GM12878 (cell line): ENCODE measurements at regions of chr6 and their contacts with region 1.

Region 1: GRCh38 chr6:73520688-73521350 is at the start of gene EEF1A1:
- DNase-seq: peak; percentile 98
- ATAC-seq: peak; percentile 75
- H3K4me3 ChIP-seq: peak within 1 kb of the TSS; percentile 91
- H3K27ac ChIP-seq: peak within 1 kb of the TSS; percentile 100
- H3K4me1 ChIP-seq: peaks cover 13% of the 10 kb centered on the region
- H3K27me3 ChIP-seq: no peaks in the 10 kb centered on the region
- CTCF ChIP-seq: no peak; a peak in 1 of 6 replicates
- EP300 ChIP-seq: peak; percentile 49 to 69; a peak in 2 of 4 replicates
- POLR2A ChIP-seq: peak; percentile 88
- RAD21 ChIP-seq: 0 out of 2 replicates have a peak, but pooled peaks have one; percentile 16
- polyA plus RNA-seq, gene EEF1A1: 8,305 to 13,725 TPM

Region 2: GRCh38 chr6:73461537-73462350 is 59.1 kb before region 1 on chr6 and contains the start of gene MTO1:
- CTCF ChIA-PET with region 1: interaction called, 16 read pairs
- POLR2A ChIA-PET with region 1: interaction called, 17 read pairs
- RAD21 ChIA-PET with region 1: interaction called, 9 read pairs
- SMC1A ChIA-PET with region 1: interaction called, 7 read pairs
- in situ Hi-C with region 1: no loop called
- intact Hi-C with region 1: no loop called
- DNase-seq: no peak
- ATAC-seq: peak; percentile 96
- H3K4me3 ChIP-seq: peak within 1 kb of the TSS; percentile 92
- H3K27ac ChIP-seq: peak within 1 kb of the TSS; percentile 87
- H3K4me1 ChIP-seq: peaks cover 10% of the 10 kb centered on the region
- H3K27me3 ChIP-seq: no peaks in the 10 kb centered on the region
- CTCF ChIP-seq: no peak
- EP300 ChIP-seq: no peak
- POLR2A ChIP-seq: peak; percentile 89
- RAD21 ChIP-seq: no peak
- polyA plus RNA-seq, gene MTO1: 24.8 to 28.0 TPM

Region 3: DNA sequence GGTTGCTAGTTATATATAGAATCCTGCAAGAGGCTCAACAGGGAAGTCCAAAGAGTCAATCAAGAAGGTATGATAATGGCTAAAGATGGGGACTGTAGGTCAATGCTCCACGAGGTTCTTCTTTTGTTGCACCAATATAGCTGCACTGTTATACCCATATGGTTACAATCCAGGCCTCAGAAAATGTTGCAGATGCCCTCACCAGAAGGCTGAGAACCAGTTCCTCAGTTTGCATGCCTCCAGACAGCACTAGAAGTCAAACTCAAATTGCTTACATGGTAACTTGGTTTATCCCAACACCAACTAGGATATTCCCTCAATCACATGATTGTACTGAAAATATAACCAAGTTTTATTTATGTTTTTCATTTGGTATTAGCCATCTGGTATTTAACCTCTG is 12.0 kb before region 1 on chr6:
- CTCF ChIA-PET with region 1: interaction called, 6 read pairs
- POLR2A ChIA-PET with region 1: interaction called, 21 read pairs
- RAD21 ChIA-PET with region 1: interaction called, 4 read pairs
- SMC1A ChIA-PET with region 1: interaction called, 4 read pairs
- in situ Hi-C with region 1: no loop called
- intact Hi-C with region 1: no loop called
- DNase-seq: no peak
- ATAC-seq: no peak
- H3K4me3 ChIP-seq: no peak overlapping the region
- H3K27ac ChIP-seq: no peak overlapping the region
- H3K4me1 ChIP-seq: no peaks in the 10 kb centered on the region; the same call in 1 of the 2 replicates
- H3K27me3 ChIP-seq: no peaks in the 10 kb centered on the region
- CTCF ChIP-seq: no peak
- EP300 ChIP-seq: no peak
- POLR2A ChIP-seq: no peak
- RAD21 ChIP-seq: no peak

Region 4: DNA sequence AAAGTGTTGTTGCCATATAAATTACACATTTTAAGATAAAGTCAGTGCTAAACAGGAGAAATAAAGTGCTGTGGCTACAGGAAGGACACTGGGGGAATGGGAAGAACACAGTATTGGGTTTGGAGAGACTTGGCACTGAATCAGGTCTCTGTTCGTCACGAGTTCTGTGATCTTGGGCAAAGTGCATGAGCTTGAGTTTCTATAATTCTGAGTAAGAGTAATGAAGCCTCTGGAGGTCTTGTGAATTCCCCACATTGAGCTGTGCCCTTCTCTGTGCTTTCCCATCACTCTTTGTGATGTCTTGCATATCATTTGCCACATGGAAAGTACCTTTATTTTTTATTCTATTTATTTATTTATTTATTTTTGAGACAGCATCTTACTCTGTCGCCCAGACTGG is 16.9 kb after region 1 on chr6:
- CTCF ChIA-PET with region 1: interaction called, 23 read pairs
- POLR2A ChIA-PET with region 1: interaction called, 52 read pairs
- RAD21 ChIA-PET with region 1: interaction called, 14 read pairs
- SMC1A ChIA-PET with region 1: interaction called, 24 read pairs
- in situ Hi-C with region 1: no loop called
- intact Hi-C with region 1: no loop called
- DNase-seq: no peak
- ATAC-seq: peak; percentile 93
- H3K4me3 ChIP-seq: no peak overlapping the region
- H3K27ac ChIP-seq: 0 out of 2 replicates have a peak overlapping the region, but pooled peaks have one; percentile 6
- H3K4me1 ChIP-seq: no peaks in the 10 kb centered on the region
- H3K27me3 ChIP-seq: no peaks in the 10 kb centered on the region
- CTCF ChIP-seq: no peak
- EP300 ChIP-seq: no peak
- POLR2A ChIP-seq: no peak
- RAD21 ChIP-seq: no peak

Region 5: DNA sequence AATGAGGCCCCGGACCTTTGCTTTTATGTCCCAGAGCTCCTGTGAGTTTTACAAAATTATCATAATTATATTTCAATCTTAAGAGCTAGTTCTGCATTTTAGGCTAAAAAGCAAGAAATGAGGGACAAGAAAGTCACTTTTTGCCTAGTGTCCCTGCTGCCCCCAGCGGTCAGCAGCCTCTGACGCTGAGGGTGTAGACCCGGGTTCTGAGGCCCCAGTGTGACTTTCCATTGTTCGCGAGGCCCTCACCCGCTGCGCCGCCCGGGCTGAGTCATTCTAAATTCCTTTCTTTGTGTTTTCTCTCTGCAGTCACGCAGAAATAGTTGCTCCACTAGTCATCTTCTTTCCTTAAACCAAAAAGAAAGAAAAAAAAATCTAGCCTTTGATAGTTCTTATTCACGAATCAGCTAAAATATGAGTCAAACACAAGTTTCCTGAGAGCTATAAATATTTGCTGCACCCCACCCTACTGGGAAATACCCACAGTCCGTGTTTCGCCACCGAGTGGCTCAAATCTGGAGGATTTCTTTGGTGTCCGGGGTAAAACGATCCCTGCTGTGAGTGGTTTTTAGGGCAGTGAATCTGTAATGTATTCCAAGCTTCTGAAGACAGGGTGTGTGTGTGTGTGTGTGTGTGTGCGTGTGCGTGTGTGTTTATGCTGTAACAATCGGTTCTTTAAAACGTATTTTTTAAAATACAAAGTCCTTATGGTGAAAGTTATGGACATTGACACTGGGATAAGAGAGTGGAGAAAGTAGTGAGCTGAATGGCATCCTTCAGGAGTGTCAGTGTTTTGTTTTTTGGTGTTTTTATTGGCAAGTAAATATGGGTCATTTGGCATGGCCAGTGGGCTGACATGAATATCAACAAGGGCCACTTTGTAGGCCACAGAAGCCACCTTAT is 59.7 kb after region 1 on chr6:
- CTCF ChIA-PET with region 1: interaction called, 16 read pairs
- POLR2A ChIA-PET with region 1: interaction called, 55 read pairs
- RAD21 ChIA-PET with region 1: interaction called, 49 read pairs
- SMC1A ChIA-PET with region 1: interaction called, 43 read pairs
- in situ Hi-C with region 1: no loop called
- intact Hi-C with region 1: loop called (anchors 1 kb)
- DNase-seq: peak; percentile 61
- ATAC-seq: peak; percentile 92
- H3K4me3 ChIP-seq: peak overlapping the region; percentile 34; the same call in 1 of the 2 replicates
- H3K27ac ChIP-seq: peak overlapping the region; percentile 96
- H3K4me1 ChIP-seq: peaks cover 20% of the 10 kb centered on the region
- H3K27me3 ChIP-seq: no peaks in the 10 kb centered on the region
- CTCF ChIP-seq: peak; percentile 42 to 53 (median 46); a peak in 5 of 6 replicates
- EP300 ChIP-seq: no peak
- POLR2A ChIP-seq: peak; percentile 71
- RAD21 ChIP-seq: 0 out of 2 replicates have a peak, but pooled peaks have one; percentile 36

Region 6: DNA sequence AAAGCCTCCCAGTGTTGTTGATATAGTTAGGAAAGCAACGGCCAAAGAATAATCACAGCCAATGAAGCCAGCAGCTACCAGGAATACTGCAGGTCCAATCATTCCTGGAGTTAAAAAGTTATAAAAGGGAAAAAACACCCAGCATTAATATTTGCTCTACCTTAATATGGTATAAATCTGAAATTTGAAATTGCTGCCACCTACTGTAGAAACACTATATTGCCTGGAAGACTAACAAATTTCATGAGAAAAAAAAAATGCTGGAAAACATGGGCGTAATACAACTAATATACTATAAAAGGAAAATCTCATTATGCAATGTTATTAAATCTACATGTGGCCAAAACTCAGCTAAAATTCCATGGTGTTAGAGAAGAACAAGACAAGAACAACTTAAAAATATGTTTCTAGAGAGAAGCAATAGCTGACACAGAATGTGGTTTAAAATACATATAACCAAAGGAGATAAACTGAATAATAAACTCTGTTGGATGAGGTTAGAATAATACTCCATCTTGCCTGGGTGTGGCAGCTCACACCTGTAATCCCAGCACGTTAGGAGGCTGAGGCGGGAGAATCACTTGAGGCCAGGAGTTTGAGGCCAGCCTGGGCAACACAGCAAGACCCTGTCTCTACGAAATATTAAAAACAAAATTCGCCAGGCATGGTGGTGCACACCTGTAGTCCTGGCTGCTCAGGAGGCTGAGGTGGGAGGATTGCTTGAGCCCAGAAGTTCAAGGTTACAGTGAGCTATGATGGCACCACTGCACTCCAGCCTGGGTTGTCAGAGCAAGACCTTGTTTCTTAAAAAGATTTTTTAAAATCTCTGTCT is 89.8 kb after region 1 on chr6:
- CTCF ChIA-PET with region 1: interaction called, 127 read pairs
- POLR2A ChIA-PET with region 1: interaction called, 13 read pairs
- RAD21 ChIA-PET with region 1: interaction called, 51 read pairs
- SMC1A ChIA-PET with region 1: interaction called, 27 read pairs
- in situ Hi-C with region 1: loop called (anchors 25 kb)
- intact Hi-C with region 1: loop called (anchors 1 kb)
- DNase-seq: peak; percentile 23
- ATAC-seq: peak; percentile 79
- H3K4me3 ChIP-seq: no peak overlapping the region
- H3K27ac ChIP-seq: no peak overlapping the region
- H3K4me1 ChIP-seq: no peaks in the 10 kb centered on the region
- H3K27me3 ChIP-seq: no peaks in the 10 kb centered on the region
- CTCF ChIP-seq: peak; percentile 37 to 66 (median 58); a peak in 5 of 6 replicates
- EP300 ChIP-seq: no peak
- POLR2A ChIP-seq: no peak
- RAD21 ChIP-seq: peak; percentile 74

Region 7: GRCh38 chr6:73722318-73723060 is 201.7 kb after region 1 on chr6:
- CTCF ChIA-PET with region 1: no interaction called
- POLR2A ChIA-PET with region 1: no interaction called
- RAD21 ChIA-PET with region 1: no interaction called
- SMC1A ChIA-PET with region 1: no interaction called
- in situ Hi-C with region 1: no loop called
- intact Hi-C with region 1: no loop called
- DNase-seq: peak; percentile 46
- ATAC-seq: peak; percentile 85
- H3K4me3 ChIP-seq: no peak overlapping the region
- H3K27ac ChIP-seq: no peak overlapping the region; the same call in 1 of the 2 replicates
- H3K4me1 ChIP-seq: peaks cover 3% of the 10 kb centered on the region
- H3K27me3 ChIP-seq: no peaks in the 10 kb centered on the region
- CTCF ChIP-seq: no peak
- EP300 ChIP-seq: peak; percentile 53 to 73; a peak in 3 of 4 replicates
- POLR2A ChIP-seq: no peak
- RAD21 ChIP-seq: no peak

Region 8: GRCh38 chr6:75284632-75285286 is 1763.9 kb after region 1 on chr6 and contains the start of gene TMEM30A:
- CTCF ChIA-PET with region 1: no interaction called
- POLR2A ChIA-PET with region 1: interaction called, 3 read pairs
- RAD21 ChIA-PET with region 1: no interaction called
- SMC1A ChIA-PET with region 1: no interaction called
- in situ Hi-C with region 1: no loop called
- intact Hi-C with region 1: loop called (anchors 5 kb)
- DNase-seq: peak; percentile 100
- ATAC-seq: peak; percentile 80
- H3K4me3 ChIP-seq: peak within 1 kb of the TSS; percentile 94
- H3K27ac ChIP-seq: peak within 1 kb of the TSS; percentile 80
- H3K4me1 ChIP-seq: no peaks in the 10 kb centered on the region
- H3K27me3 ChIP-seq: no peaks in the 10 kb centered on the region
- CTCF ChIP-seq: no peak
- EP300 ChIP-seq: peak in 1 of 2 experiments; percentile 71; a peak in 1 of 4 replicates
- POLR2A ChIP-seq: peak; percentile 96
- RAD21 ChIP-seq: no peak
- polyA plus RNA-seq, gene TMEM30A: 11.9 to 23.1 TPM